ENCODE measurements at regions of chr1 and their contacts with region 1.

Region 1: DNA sequence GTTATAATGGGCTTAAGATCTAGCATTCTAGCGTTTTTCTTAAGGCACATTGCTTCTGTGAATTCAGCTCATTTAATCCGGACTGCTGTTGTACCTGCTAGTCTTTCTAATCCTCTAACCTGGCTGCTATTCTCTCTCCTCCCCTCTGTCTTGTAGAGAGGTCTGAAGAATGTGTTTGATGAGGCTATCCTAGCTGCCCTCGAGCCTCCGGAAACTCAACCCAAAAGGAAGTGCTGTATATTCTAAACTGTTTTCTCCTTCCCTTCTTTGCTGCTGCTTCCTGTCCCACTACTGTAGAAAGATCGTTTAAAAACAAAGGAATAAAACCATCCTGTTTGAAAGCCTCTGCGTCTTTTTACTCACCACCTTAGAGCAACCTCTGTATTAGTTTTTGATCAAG is 37.3 kb downstream of the CDC42 start:
- DNase-seq: peak in 5 of 9 donors; percentile 12 to 19 (median 16)
- ATAC-seq: peak; percentile 35
- H3K4me3 ChIP-seq: peak overlapping the region; percentile 16
- H3K4me3 Mint-ChIP-seq: peak overlapping the region; percentile 76 to 87 (median 78)
- H3K27ac ChIP-seq: peak overlapping the region; percentile 63
- H3K27ac Mint-ChIP-seq: peak overlapping the region; percentile 68 to 93 (median 78)
- H3K4me1 ChIP-seq: peaks cover 48 to 57% of the 10 kb centered on the region in 2 donors
- H3K4me1 Mint-ChIP-seq: peaks cover 69 to 97% (median 93%) of the 10 kb centered on the region in 7 donors
- H3K27me3 ChIP-seq: no peaks in the 10 kb centered on the region
- H3K27me3 Mint-ChIP-seq: no peaks in the 10 kb centered on the region

Region 2: DNA sequence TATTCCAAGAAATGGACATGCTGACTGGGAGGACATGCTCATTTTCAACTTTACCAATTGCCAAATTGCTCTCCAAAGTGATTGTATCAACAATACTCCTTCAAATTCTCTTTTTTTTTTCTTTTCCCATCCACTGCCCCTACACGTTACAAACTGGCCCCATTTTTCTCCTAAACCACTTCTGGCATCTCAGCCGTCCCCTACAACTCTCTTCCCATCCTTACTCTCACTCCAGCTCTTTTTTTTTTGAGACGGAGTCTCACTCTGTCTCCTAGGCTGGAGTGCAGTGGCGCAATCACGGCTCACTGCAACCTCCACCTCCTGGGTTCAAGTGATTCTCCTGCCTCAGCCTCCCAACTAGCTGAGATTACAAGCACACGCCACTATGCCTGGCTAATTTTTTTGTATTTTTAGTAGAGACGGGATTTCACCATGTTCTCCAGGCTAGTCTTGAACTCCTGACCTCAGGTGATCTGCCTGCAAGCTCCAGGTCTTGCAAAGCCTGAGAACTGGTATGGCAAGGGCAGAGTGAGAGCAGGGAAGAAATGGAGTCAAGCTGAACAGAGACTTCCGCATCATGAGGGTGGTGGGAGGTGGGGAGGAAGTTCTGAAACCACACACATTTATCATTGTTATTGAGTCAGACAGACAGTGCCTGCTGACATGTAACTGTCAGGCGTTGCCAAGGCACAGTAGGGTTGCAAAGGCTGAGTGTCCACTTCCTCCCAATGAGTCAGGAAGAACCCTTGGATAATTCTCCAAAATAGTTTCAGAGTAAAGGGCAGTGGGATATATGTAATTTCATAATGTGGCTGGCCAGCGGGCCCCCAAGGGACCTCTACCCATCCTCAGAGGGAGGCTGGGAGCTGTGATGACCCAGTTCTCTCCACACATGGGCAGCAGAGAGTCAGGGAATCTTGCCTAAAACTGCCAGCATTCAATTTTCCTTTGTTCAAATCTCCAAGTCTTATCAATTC is 70.9 kb before region 1 on chr1:
- CTCF ChIA-PET with region 1: interaction called, 11 read pairs
- POLR2A ChIA-PET with region 1: interaction called, 11 read pairs
- intact Hi-C with region 1: loop called (anchors 1 to 2 kb)
- DNase-seq: peak; percentile 31 to 86 (median 68)
- ATAC-seq: peak; percentile 96
- H3K4me3 ChIP-seq: no peak overlapping the region
- H3K4me3 Mint-ChIP-seq: peak overlapping the region; percentile 44 to 77 (median 66)
- H3K27ac ChIP-seq: peak overlapping the region; percentile 47
- H3K27ac Mint-ChIP-seq: peak overlapping the region; percentile 83 to 99 (median 95)
- H3K4me1 ChIP-seq: peaks cover 22 to 27% of the 10 kb centered on the region in 2 donors
- H3K4me1 Mint-ChIP-seq: peaks cover 20 to 32% (median 30%) of the 10 kb centered on the region in 7 donors
- H3K27me3 ChIP-seq: no peaks in the 10 kb centered on the region
- H3K27me3 Mint-ChIP-seq: peaks cover 0 to 3% (median 0%) of the 10 kb centered on the region in 5 donors

Region 3: GRCh38 chr1:22057861-22058260 is 31.9 kb before region 1 on chr1:
- CTCF ChIA-PET with region 1: interaction called, 7 read pairs
- POLR2A ChIA-PET with region 1: interaction called, 13 read pairs
- intact Hi-C with region 1: loop called (anchors 2 to 5 kb)
- DNase-seq: no peak
- ATAC-seq: no peak
- H3K4me3 ChIP-seq: no peak overlapping the region
- H3K4me3 Mint-ChIP-seq: peak overlapping the region; percentile 20 to 99 (median 72)
- H3K27ac ChIP-seq: peak overlapping the region; percentile 57
- H3K27ac Mint-ChIP-seq: peak overlapping the region in 7 of 9 donors; percentile 21 to 97 (median 64)
- H3K4me1 ChIP-seq: peaks cover 70 to 75% of the 10 kb centered on the region in 2 donors
- H3K4me1 Mint-ChIP-seq: peaks cover 51 to 89% (median 71%) of the 10 kb centered on the region in 7 donors
- H3K27me3 ChIP-seq: no peaks in the 10 kb centered on the region
- H3K27me3 Mint-ChIP-seq: peaks cover 0 to 2% (median 0%) of the 10 kb centered on the region in 5 donors

Region 4: GRCh38 chr1:22077728-22078127 is 12.1 kb before region 1 on chr1:
- CTCF ChIA-PET with region 1: no interaction called
- POLR2A ChIA-PET with region 1: interaction called, 4 read pairs
- intact Hi-C with region 1: loop called in 1 of 2 experiments (anchors 1 kb)
- DNase-seq: no peak
- ATAC-seq: no peak
- H3K4me3 ChIP-seq: no peak overlapping the region
- H3K4me3 Mint-ChIP-seq: peak overlapping the region in 8 of 10 donors; percentile 22 to 73 (median 64)
- H3K27ac ChIP-seq: peak overlapping the region; percentile 48
- H3K27ac Mint-ChIP-seq: peak overlapping the region in 8 of 9 donors; percentile 23 to 94 (median 74)
- H3K4me1 ChIP-seq: peaks cover 43 to 64% of the 10 kb centered on the region in 2 donors
- H3K4me1 Mint-ChIP-seq: peaks cover 69 to 99% (median 88%) of the 10 kb centered on the region in 7 donors
- H3K27me3 ChIP-seq: no peaks in the 10 kb centered on the region
- H3K27me3 Mint-ChIP-seq: no peaks in the 10 kb centered on the region

Region 5: GRCh38 chr1:22112554-22112953 is 22.8 kb after region 1 on chr1:
- CTCF ChIA-PET with region 1: no interaction called
- POLR2A ChIA-PET with region 1: no interaction called
- intact Hi-C with region 1: no loop called
- DNase-seq: no peak
- ATAC-seq: no peak
- H3K4me3 ChIP-seq: no peak overlapping the region
- H3K4me3 Mint-ChIP-seq: no peak overlapping the region
- H3K27ac ChIP-seq: no peak overlapping the region
- H3K27ac Mint-ChIP-seq: peak overlapping the region in 6 of 9 donors; percentile 28 to 82 (median 68)
- H3K4me1 ChIP-seq: no peaks in the 10 kb centered on the region
- H3K4me1 Mint-ChIP-seq: peaks cover 30 to 56% (median 52%) of the 10 kb centered on the region in 7 donors
- H3K27me3 ChIP-seq: no peaks in the 10 kb centered on the region
- H3K27me3 Mint-ChIP-seq: no peaks in the 10 kb centered on the region

Measured in naive thymus-derived CD4-positive, alpha-beta T cell (primary cell).